PC-3 (cell line): ENCODE measurements at regions of chr11 and their contacts with region 1.

Region 1: GRCh38 chr11:94134651-94135512 is 6.2 kb downstream of the PANX1 start:
- DNase-seq: peak; percentile 90
- ATAC-seq: peak; percentile 71
- H3K4me3 ChIP-seq: peak overlapping the region; percentile 14
- H3K27ac ChIP-seq: peak overlapping the region; percentile 69
- H3K4me1 ChIP-seq: peaks cover 77% of the 10 kb centered on the region
- H3K27me3 ChIP-seq: no peaks in the 10 kb centered on the region
- CTCF ChIP-seq: no peak

Region 2: DNA sequence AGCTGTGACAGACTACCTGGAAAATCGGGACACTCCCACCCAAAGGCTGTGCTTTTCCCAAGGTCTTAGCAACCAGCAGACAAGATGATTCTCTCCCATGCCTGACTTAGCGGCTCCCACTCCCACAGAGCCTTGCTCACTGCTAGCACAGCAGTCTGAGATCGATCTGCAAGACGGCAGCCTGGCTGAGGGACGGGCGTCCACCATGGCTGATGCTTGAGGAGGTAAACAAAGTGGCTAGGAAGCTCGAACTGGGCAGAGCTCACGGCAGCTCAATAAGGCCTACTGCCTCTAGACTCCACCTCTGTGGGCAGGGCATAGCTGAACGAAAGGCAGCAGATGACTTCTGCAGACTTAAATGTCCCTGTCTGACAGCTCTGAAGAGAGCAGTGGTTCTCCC is 676.6 kb before region 1 on chr11:
- CTCF ChIA-PET with region 1: no interaction called
- POLR2A ChIA-PET with region 1: no interaction called
- intact Hi-C with region 1: no loop called
- DNase-seq: no peak
- ATAC-seq: no peak
- H3K4me3 ChIP-seq: no peak overlapping the region
- H3K27ac ChIP-seq: no peak overlapping the region
- H3K4me1 ChIP-seq: no peaks in the 10 kb centered on the region
- H3K27me3 ChIP-seq: no peaks in the 10 kb centered on the region
- CTCF ChIP-seq: no peak

Region 3: GRCh38 chr11:93939084-93939760 is 195.7 kb before region 1 on chr11:
- CTCF ChIA-PET with region 1: no interaction called
- POLR2A ChIA-PET with region 1: no interaction called
- intact Hi-C with region 1: loop called (anchors 5 kb)
- DNase-seq: peak; percentile 98
- ATAC-seq: peak; percentile 74
- H3K4me3 ChIP-seq: peak overlapping the region; percentile 13; the same call in 1 of the 2 replicates
- H3K27ac ChIP-seq: peak overlapping the region; percentile 98
- H3K4me1 ChIP-seq: peaks cover 79% of the 10 kb centered on the region
- H3K27me3 ChIP-seq: no peaks in the 10 kb centered on the region
- CTCF ChIP-seq: no peak

Region 4: GRCh38 chr11:94066901-94067429 is 67.9 kb before region 1 on chr11:
- CTCF ChIA-PET with region 1: no interaction called
- POLR2A ChIA-PET with region 1: no interaction called
- intact Hi-C with region 1: no loop called
- DNase-seq: peak; percentile 10
- ATAC-seq: no peak; the same call in 1 of the 2 replicates
- H3K4me3 ChIP-seq: no peak overlapping the region
- H3K27ac ChIP-seq: no peak overlapping the region
- H3K4me1 ChIP-seq: no peaks in the 10 kb centered on the region
- H3K27me3 ChIP-seq: no peaks in the 10 kb centered on the region
- CTCF ChIP-seq: no peak

Region 5: GRCh38 chr11:94091091-94091490 is 43.8 kb before region 1 on chr11:
- CTCF ChIA-PET with region 1: no interaction called
- POLR2A ChIA-PET with region 1: no interaction called
- intact Hi-C with region 1: no loop called
- DNase-seq: no peak
- ATAC-seq: no peak
- H3K4me3 ChIP-seq: no peak overlapping the region
- H3K27ac ChIP-seq: no peak overlapping the region
- H3K4me1 ChIP-seq: no peaks in the 10 kb centered on the region
- H3K27me3 ChIP-seq: no peaks in the 10 kb centered on the region
- CTCF ChIP-seq: no peak

Region 6: GRCh38 chr11:94171693-94172440 is 37.0 kb after region 1 on chr11:
- CTCF ChIA-PET with region 1: interaction called, 4 read pairs
- POLR2A ChIA-PET with region 1: no interaction called
- intact Hi-C with region 1: loop called (anchors 1 kb)
- DNase-seq: peak; percentile 60
- ATAC-seq: peak; percentile 73; the same call in 1 of the 2 replicates
- H3K4me3 ChIP-seq: no peak overlapping the region
- H3K27ac ChIP-seq: no peak overlapping the region
- H3K4me1 ChIP-seq: no peaks in the 10 kb centered on the region
- H3K27me3 ChIP-seq: no peaks in the 10 kb centered on the region
- CTCF ChIP-seq: peak; percentile 96

Region 7: DNA sequence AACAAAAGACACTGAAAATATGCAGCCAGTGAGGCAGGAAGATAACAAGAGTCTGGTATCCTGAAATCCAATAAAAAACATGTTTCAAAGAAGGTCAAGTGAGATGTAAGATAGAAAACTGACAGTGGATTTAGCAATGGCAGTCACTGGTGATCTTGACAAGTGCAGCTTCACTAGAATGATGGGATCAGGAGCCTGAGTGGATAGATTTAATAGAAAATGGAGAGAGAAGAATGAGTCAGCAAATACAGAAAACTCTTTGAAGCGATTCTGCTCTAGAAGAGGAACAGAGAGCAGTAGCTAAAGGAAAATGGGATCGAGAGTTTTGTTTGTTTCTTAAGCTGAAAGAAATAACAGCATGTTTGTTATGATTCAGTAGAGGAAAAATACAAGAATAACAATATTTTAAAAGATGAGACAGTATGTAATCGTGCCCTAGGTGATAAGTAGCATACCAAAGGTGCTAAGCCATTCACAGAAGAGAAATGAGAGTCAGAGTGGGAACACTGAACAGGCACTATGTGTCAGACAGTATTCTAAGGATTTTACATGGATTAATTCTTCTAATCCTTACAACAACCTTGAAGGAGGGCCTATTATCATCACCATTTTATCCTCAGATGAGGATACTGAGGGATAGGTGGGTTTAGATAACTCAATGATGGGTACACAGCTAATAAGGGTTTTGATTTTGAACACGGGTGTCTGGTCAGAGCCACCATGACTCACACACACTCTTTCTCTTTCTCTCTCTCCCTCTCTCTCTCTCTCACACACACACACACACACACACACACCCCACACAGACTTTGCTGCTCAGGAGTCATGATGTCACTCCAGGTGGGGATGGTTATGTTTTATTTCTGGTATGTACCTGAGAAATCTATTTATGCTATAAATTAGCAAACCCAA is 322.5 kb after region 1 on chr11:
- CTCF ChIA-PET with region 1: no interaction called
- POLR2A ChIA-PET with region 1: interaction called, 36 read pairs
- intact Hi-C with region 1: no loop called
- DNase-seq: no peak
- ATAC-seq: no peak
- H3K4me3 ChIP-seq: no peak overlapping the region
- H3K27ac ChIP-seq: no peak overlapping the region
- H3K4me1 ChIP-seq: peaks cover 21% of the 10 kb centered on the region
- H3K27me3 ChIP-seq: no peaks in the 10 kb centered on the region
- CTCF ChIP-seq: no peak